Ascending aorta (tissue), 2 donors: ENCODE measurements at regions of chr1 and their contacts with region 1.

Region 1: GRCh38 chr1:224356685-224357625 is at the start of gene CNIH4:
- DNase-seq: peak; percentile 82 to 96
- H3K4me3 ChIP-seq: peak within 1 kb of the TSS; percentile 59 to 97
- H3K27ac ChIP-seq: peak within 1 kb of the TSS; percentile 90 to 96
- H3K4me1 ChIP-seq: peaks cover 0 to 21% of the 10 kb centered on the region in 2 donors
- H3K27me3 ChIP-seq: no peaks in the 10 kb centered on the region
- CTCF ChIP-seq: no peak
- total RNA-seq, gene CNIH4: 26.9 TPM

Region 2: GRCh38 chr1:224434691-224435317 is 77.8 kb after region 1 on chr1 and contains the start of gene WDR26:
- intact Hi-C with region 1: loop called (anchors 2 kb)
- DNase-seq: peak; percentile 44 to 91
- H3K4me3 ChIP-seq: peak within 1 kb of the TSS; percentile 73 to 76
- H3K27ac ChIP-seq: peak within 1 kb of the TSS; percentile 99 to 100
- H3K4me1 ChIP-seq: peaks cover 0 to 27% of the 10 kb centered on the region in 2 donors
- H3K27me3 ChIP-seq: no peaks in the 10 kb centered on the region
- CTCF ChIP-seq: no peak
- total RNA-seq, gene WDR26: 31.8 TPM